GM10248 (cell line): ENCODE measurements at regions of chr3 and their contacts with region 1.

Region 1: DNA sequence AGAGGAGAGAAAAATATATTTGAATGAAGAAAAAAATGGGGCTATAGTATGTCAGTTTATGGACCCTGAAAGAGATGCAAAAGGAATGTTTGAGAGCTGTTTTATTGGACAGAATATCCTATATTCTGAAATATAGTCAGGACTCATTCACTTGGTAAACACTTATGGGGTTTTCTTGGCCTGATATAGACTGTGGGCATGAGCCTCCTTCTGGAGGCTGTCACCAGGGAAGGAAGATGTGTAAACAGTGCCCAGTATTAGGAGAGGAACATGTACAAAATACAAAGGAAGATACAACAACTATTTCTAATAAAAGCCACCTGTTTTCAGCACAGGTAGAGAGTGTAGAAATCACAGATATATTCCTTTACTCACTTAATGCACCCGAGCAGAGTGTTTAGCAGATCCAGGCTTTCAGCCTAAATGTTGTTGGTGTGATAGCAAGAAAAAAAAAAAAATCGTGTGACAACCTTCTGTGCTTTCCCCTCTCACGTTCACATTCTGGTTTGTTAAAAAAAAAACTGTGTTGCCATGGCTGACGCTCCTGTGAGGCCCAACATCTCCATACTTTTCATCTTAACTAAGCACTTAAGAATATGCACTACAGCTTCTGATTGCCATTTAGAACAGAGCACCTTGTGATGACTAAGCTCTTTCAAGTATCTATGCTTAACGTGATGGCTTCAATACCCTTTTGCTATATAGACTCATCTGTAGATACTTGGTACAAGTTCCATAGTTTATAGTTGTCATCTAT is 134.1 kb downstream of the MBNL1 start:
- DNase-seq: no peak
- CTCF ChIP-seq: no peak

Region 2: GRCh38 chr3:152389316-152389934 is 13.4 kb before region 1 on chr3:
- CTCF ChIA-PET with region 1: interaction called, 31 read pairs
- POLR2A ChIA-PET with region 1: no interaction called
- DNase-seq: no peak
- CTCF ChIP-seq: no peak